ENCODE measurements at regions of chr5 and their contacts with region 1.

Region 1: DNA sequence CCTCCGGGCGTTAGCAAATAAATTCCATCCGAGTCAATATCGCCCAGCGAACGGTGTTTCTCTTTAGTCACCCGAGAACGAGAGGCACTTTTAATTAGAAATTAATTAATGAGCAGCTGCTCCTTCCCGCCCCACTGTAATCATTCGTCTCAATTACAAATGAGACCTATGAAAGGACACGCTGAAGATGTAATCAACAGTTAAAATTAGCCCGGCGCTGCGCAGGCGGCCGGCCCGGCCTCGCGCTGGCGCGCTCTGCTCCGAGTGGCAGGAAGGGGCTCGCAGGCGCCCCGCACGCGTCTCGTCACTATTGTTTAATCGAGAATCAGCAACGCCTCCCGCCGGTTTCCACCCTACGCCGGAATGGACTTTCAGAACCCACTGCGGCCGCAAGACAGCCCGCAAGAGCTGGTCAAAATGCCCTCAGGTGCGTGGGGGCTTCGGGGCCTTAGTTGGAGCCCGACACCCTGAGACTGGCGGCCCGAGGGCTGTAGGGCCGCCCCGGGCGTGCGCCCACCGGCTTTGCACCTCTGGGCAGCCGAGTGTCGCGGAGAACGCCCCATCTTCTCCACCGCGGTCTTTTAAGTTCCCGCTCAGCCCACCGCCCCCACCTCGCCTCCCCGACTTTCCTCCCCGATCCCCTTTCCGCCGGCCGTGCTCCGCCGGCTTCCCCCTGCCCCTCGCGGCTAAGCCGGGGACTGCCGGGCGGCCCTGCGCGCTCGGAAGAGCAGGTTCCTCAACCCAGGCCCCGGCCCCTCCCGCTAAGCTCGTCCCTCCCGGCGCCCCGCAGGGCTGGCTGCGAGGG is 597 bp upstream of the IRX4 start:
- DNase-seq: peak; percentile 58
- H3K4me3 Mint-ChIP-seq: peak overlapping the region; percentile 97
- H3K27ac Mint-ChIP-seq: peak overlapping the region; percentile 99
- H3K4me1 Mint-ChIP-seq: peaks cover 7% of the 10 kb centered on the region
- H3K27me3 Mint-ChIP-seq: no peaks in the 10 kb centered on the region
- CTCF ChIP-seq: no peak

Region 2: GRCh38 chr5:1799602-1800471 is 83.5 kb before region 1 on chr5 and contains the start of gene MRPL36:
- CTCF ChIA-PET with region 1: interaction called, 3 read pairs
- POLR2A ChIA-PET with region 1: interaction called, 131 read pairs
- intact Hi-C with region 1: loop called (anchors 2 kb)
- DNase-seq: peak; percentile 90
- H3K4me3 Mint-ChIP-seq: peak within 1 kb of the TSS; percentile 98
- H3K27ac Mint-ChIP-seq: peak within 1 kb of the TSS; percentile 97
- H3K4me1 Mint-ChIP-seq: peaks cover 29% of the 10 kb centered on the region
- H3K27me3 Mint-ChIP-seq: no peaks in the 10 kb centered on the region
- CTCF ChIP-seq: no peak
- total RNA-seq, gene MRPL36: 90.5 and 101 TPM in 2 replicates

Region 3: GRCh38 chr5:1936413-1936812 is 53.1 kb after region 1 on chr5:
- CTCF ChIA-PET with region 1: interaction called, 6 read pairs
- POLR2A ChIA-PET with region 1: interaction called, 69 read pairs
- intact Hi-C with region 1: loop called (anchors 2 kb)
- DNase-seq: peak; percentile 83
- H3K4me3 Mint-ChIP-seq: peak overlapping the region; percentile 17
- H3K27ac Mint-ChIP-seq: peak overlapping the region; percentile 90
- H3K4me1 Mint-ChIP-seq: peaks cover 20% of the 10 kb centered on the region
- H3K27me3 Mint-ChIP-seq: no peaks in the 10 kb centered on the region
- CTCF ChIP-seq: no peak

Region 4: DNA sequence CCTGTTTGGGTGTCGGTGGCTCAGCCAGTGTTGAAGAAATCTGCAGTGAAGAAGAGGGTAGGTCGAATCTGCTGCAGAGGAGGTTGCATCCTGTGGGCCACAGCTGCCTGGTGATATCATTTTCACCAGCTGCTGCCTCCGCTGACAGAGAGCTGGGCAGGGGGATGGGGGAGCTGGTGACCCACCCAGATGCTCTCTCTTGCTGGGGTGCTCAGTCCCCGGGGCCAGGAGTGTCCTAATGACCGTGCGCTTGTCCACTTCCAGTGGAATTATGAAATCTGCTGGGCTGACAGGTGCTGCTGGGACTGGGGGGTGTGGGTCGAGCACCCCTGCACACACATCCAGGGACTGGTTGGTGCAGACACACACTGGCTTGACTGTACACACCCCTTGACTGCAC is 82.6 kb after region 1 on chr5:
- CTCF ChIA-PET with region 1: interaction called, 4 read pairs
- POLR2A ChIA-PET with region 1: interaction called, 136 read pairs
- intact Hi-C with region 1: loop called (anchors 1 kb)
- DNase-seq: no peak
- H3K4me3 Mint-ChIP-seq: no peak overlapping the region
- H3K27ac Mint-ChIP-seq: no peak overlapping the region
- H3K4me1 Mint-ChIP-seq: peaks cover 19% of the 10 kb centered on the region
- H3K27me3 Mint-ChIP-seq: no peaks in the 10 kb centered on the region
- CTCF ChIP-seq: no peak

Region 5: DNA sequence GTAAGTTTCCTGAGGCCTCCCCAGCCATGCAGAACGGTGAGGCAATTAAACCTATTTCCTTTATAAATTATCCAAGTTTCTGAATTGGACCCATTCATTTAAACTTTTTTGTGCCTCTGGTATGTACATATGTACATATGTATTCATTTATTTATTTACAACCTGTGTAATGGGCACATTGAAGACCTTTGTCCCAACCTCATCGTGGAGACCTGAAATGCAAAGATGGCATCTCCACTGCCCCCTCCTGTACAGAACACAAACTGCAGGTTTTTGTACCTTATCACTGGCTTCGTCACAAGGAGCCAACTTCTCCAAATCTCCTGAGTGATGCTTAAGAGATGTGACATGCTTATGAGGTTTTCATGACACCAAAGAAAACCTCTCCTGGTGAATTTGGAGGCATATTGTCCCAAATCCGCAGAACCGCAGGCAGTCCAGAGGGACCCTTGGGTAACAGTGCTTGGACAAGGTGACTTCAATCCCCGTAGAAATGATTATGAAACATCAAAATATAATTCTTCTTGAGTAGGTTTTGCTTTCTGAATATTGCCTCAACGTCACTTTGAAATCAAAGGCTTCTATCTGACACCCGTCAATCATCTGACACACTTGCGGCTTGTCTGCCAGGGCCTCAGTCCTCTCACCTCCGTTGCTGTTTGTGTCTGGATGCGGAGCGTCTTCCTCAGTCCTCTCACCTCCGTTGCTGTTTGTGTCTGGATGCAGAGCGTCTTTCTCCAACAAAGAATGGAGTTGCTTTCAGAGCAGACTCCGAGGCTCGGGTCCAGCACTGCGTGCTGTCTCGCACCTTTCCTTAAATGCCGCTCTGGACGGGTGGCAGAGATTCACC is 134.4 kb after region 1 on chr5:
- CTCF ChIA-PET with region 1: no interaction called
- POLR2A ChIA-PET with region 1: no interaction called
- intact Hi-C with region 1: loop called (anchors 2 kb)
- DNase-seq: peak; percentile 59
- H3K4me3 Mint-ChIP-seq: no peak overlapping the region
- H3K27ac Mint-ChIP-seq: no peak overlapping the region
- H3K4me1 Mint-ChIP-seq: no peaks in the 10 kb centered on the region
- H3K27me3 Mint-ChIP-seq: no peaks in the 10 kb centered on the region
- CTCF ChIP-seq: peak; percentile 47

Region 6: GRCh38 chr5:2093859-2094615 is 210.7 kb after region 1 on chr5:
- CTCF ChIA-PET with region 1: no interaction called
- POLR2A ChIA-PET with region 1: no interaction called
- intact Hi-C with region 1: loop called (anchors 5 kb)
- DNase-seq: peak; percentile 92
- H3K4me3 Mint-ChIP-seq: peak overlapping the region; percentile 62
- H3K27ac Mint-ChIP-seq: peak overlapping the region; percentile 99
- H3K4me1 Mint-ChIP-seq: peaks cover 21% of the 10 kb centered on the region
- H3K27me3 Mint-ChIP-seq: no peaks in the 10 kb centered on the region
- CTCF ChIP-seq: no peak

Region 7: DNA sequence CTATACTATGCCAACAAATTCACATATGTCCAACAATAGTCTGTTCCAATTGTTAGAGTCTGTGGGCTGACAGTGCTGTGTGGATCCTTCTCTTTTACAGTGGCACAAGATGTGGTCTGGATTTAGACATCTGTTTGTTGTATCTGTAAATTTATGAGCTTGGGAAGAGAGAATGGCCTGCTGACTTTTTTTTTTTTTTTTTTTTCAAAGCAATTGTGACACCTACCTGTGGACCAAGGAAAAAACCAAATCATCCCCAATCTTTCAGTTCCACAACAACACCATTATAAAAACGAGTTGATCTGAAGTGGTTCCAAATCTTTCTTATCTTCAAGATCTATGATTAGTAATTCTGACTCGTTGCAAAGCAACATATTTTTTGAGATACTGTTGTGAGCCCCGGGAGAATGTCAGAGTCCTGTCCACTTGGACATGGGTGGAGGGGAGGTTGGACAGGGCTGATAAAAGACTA is 863.3 kb after region 1 on chr5:
- CTCF ChIA-PET with region 1: no interaction called
- POLR2A ChIA-PET with region 1: interaction called, 9 read pairs
- intact Hi-C with region 1: loop called (anchors 2 kb)
- DNase-seq: peak; percentile 71
- H3K4me3 Mint-ChIP-seq: peak overlapping the region; percentile 82
- H3K27ac Mint-ChIP-seq: peak overlapping the region; percentile 94
- H3K4me1 Mint-ChIP-seq: peaks cover 32% of the 10 kb centered on the region
- H3K27me3 Mint-ChIP-seq: no peaks in the 10 kb centered on the region
- CTCF ChIP-seq: peak; percentile 22